Activated T-helper 2 cell treated with anti-CD3 and anti-CD28 coated beads, Interferon-gamma antibody, Interleukin-2, Interleukin-4, amounts not matched to agents 10 μg/mL and 5 μg/mL and 100 μg/mL, durations not matched to agents 14 hours and 24 hours and 36 hours (primary cell): ENCODE measurements at regions of chr10 and their contacts with region 1.

Region 1: DNA sequence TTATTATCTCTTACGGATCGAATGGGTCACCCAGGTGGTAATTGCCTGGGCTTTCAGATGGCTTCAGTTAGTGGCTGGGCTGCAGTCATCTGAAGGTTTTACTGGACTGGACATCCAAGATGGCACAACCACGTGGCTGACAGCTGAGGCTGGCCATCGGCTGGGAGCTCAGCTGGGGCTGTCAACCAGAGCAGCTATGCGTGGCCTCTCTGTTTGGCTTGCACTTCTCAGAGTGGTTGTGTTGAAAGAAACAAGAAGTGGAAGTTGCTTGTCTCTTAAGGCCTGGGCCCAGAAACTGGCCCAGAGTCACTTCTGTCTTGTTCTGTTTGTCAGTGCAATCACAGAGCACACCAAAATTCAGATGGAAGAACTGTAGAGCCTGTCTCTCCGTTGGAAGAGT is 5.7 kb upstream of the GDI2 start:
- DNase-seq: no peak
- H3K4me3 Mint-ChIP-seq: no peak overlapping the region
- H3K27ac Mint-ChIP-seq: no peak overlapping the region
- H3K4me1 Mint-ChIP-seq: peaks cover 40% of the 10 kb centered on the region
- H3K27me3 Mint-ChIP-seq: no peaks in the 10 kb centered on the region

Region 2: DNA sequence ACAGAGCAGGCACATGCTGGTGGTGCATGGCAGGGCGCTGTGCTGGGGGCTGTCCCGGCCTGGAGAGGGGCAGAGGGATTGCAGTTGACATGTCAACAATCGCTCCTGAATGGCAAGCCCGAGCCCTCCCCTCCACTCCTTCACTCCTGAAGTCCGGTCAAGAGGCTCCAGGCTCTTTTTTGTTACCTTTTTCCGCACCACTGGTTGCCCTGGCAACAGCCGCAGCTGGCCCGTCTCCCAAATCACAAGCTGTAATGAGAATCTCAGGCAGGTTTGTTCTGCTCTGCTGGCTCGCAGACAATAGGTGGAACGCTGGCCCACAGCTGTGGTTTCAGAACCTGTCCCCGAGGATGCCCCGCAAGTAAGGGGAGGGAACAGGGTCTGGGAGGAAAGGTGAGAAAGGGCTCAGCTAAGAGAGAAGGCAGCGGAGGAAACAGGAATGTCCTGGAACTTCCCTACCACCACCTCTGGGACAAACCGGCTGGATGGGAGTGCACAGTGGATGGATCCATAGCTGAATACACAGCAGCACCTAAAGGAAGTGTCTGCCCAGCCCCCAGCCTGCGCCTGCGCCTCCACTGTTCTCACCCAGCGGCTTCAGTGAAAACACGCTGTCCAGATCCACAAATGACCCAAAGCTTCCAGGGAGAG is 235.2 kb before region 1 on chr10:
- intact Hi-C with region 1: no loop called
- DNase-seq: no peak
- H3K4me3 Mint-ChIP-seq: no peak overlapping the region
- H3K27ac Mint-ChIP-seq: no peak overlapping the region
- H3K4me1 Mint-ChIP-seq: no peaks in the 10 kb centered on the region
- H3K27me3 Mint-ChIP-seq: peaks cover 14% of the 10 kb centered on the region

Region 3: GRCh38 chr10:5844345-5845048 is 25.6 kb after region 1 on chr10:
- intact Hi-C with region 1: loop called (anchors 1 kb)
- DNase-seq: no peak
- H3K4me3 Mint-ChIP-seq: no peak overlapping the region
- H3K27ac Mint-ChIP-seq: peak overlapping the region; percentile 47
- H3K4me1 Mint-ChIP-seq: peaks cover 19% of the 10 kb centered on the region
- H3K27me3 Mint-ChIP-seq: peaks cover 2% of the 10 kb centered on the region